Activated naive CD4-positive, alpha-beta T cell treated with anti-CD3 and anti-CD28 coated beads for 36 hours (primary cell): ENCODE measurements at regions of chr11 and their contacts with region 1.

Region 1: DNA sequence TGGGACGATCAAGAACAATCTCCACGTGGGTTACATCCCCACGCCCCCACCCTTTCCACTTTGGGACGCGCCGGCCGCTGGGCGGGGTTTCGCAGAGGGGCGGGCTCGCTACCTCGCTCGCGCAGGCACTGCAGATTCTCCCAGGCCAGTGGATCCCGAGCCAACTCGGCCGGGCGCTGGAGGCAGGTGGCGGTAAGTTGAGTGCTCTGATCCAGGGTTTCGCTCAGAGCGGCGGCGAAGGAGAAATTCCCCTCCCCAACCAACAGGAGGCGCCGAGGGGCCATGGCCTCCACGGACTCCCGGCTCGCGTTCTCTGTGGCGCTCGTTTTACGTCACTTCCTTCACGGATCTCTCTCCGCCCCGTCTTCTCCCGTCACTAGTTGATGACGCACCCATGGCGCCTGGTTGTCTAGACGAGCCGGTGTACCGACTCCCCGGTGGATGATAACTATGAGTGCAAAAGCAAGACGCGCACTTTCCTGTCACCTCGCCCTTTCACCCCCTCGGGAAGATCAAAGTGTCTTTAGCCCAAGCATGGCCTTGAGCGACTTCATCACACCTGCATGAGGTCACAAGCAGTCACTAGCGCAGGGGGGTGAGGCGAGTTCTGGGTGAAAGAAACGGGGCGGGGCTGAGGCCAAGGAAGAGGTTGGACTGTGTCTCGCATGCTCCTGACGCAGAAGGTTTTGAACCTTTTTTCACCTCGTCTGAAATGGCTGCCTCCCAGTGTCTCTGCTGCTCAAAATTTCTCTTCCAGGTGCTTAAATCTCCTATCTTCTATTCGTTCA is at the starts of genes CFAP68 and FDXACB1:
- DNase-seq: peak; percentile 97
- H3K4me3 Mint-ChIP-seq: peak within 1 kb of the TSS; percentile 98
- H3K27ac Mint-ChIP-seq: peak within 1 kb of the TSS; percentile 97
- H3K4me1 Mint-ChIP-seq: peaks cover 39% of the 10 kb centered on the region
- H3K27me3 Mint-ChIP-seq: no peaks in the 10 kb centered on the region
- total RNA-seq, gene CFAP68: 31.5 to 33.2 TPM
- total RNA-seq, gene FDXACB1: 3.4 to 3.8 TPM

Region 2: GRCh38 chr11:111932611-111932950 is 53.5 kb after region 1 on chr11:
- CTCF ChIA-PET with region 1: interaction called, 13 read pairs
- intact Hi-C with region 1: loop called (anchors 1 kb)
- DNase-seq: no peak
- H3K4me3 Mint-ChIP-seq: no peak overlapping the region
- H3K27ac Mint-ChIP-seq: peak overlapping the region; percentile 68
- H3K4me1 Mint-ChIP-seq: peaks cover 36% of the 10 kb centered on the region
- H3K27me3 Mint-ChIP-seq: no peaks in the 10 kb centered on the region

Region 3: DNA sequence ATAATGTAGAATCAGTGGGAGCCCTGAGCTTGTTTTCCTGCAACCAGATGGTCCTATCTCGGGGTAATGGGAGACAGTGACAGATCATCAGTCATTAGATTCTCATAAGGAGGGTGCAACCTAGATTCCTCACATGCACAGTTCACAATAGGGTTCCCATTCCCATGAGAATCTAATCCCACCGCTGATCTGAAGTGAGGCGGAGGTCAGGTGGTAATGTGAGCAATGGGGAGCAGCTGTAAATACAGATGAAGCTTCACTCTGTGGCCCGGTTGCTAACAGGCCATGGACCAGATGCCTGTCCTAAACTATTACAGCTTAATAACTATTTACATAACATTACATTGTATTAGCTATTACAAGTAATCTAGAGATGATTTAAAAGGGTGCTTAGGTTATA is 75.1 kb after region 1 on chr11:
- CTCF ChIA-PET with region 1: no interaction called
- intact Hi-C with region 1: no loop called
- DNase-seq: no peak
- H3K4me3 Mint-ChIP-seq: no peak overlapping the region
- H3K27ac Mint-ChIP-seq: no peak overlapping the region
- H3K4me1 Mint-ChIP-seq: peaks cover 8% of the 10 kb centered on the region
- H3K27me3 Mint-ChIP-seq: no peaks in the 10 kb centered on the region

Region 4: DNA sequence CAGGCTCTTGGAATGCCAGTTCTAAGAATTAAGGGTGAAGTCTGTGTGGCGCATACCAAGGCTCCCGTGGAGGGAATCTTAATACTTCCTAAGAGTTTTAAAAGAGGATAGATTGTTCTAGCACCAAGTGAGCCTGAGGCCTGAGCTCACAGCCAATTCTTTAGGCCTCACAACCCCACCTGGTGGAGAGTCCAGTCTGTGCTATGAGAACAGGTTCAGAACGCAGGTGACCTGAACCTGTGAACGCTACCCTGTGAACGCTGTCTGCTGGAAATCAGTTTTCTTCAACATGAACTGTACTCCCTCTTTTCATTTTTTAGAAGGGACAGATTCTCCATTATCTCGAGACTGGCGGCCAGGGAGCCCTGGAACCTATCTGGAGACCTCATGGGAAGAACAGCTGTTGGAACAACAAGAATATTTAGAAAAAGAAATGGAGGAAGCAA is 103.0 kb after region 1 on chr11:
- CTCF ChIA-PET with region 1: interaction called, 12 read pairs
- intact Hi-C with region 1: loop called (anchors 1 kb)
- DNase-seq: peak; percentile 85
- H3K4me3 Mint-ChIP-seq: no peak overlapping the region
- H3K27ac Mint-ChIP-seq: no peak overlapping the region
- H3K4me1 Mint-ChIP-seq: peaks cover 12% of the 10 kb centered on the region
- H3K27me3 Mint-ChIP-seq: peaks cover 26% of the 10 kb centered on the region

Region 5: GRCh38 chr11:112074026-112074811 is 195.2 kb after region 1 on chr11 and contains the start of gene NKAPD1:
- CTCF ChIA-PET with region 1: no interaction called
- intact Hi-C with region 1: loop called (anchors 1 kb)
- DNase-seq: peak; percentile 86
- H3K4me3 Mint-ChIP-seq: peak within 1 kb of the TSS; percentile 97
- H3K27ac Mint-ChIP-seq: peak within 1 kb of the TSS; percentile 97
- H3K4me1 Mint-ChIP-seq: peaks cover 28% of the 10 kb centered on the region
- H3K27me3 Mint-ChIP-seq: peaks cover 6% of the 10 kb centered on the region
- total RNA-seq, gene NKAPD1: 14.8 to 19.6 TPM

Region 6: GRCh38 chr11:112226062-112226830 is 347.2 kb after region 1 on chr11 and contains the start of gene PTS:
- CTCF ChIA-PET with region 1: no interaction called
- intact Hi-C with region 1: loop called (anchors 1 kb)
- DNase-seq: peak; percentile 86
- H3K4me3 Mint-ChIP-seq: peak within 1 kb of the TSS; percentile 88
- H3K27ac Mint-ChIP-seq: peak within 1 kb of the TSS; percentile 91
- H3K4me1 Mint-ChIP-seq: peaks cover 17% of the 10 kb centered on the region
- H3K27me3 Mint-ChIP-seq: no peaks in the 10 kb centered on the region
- total RNA-seq, gene PTS: 34.6 to 39.0 TPM